HepG2 (cell line): ENCODE measurements at regions of chr13 and their contacts with region 1.

Region 1: GRCh38 chr13:77751513-77752456 is 54.3 kb downstream of the SLAIN1 start:
- DNase-seq: peak; percentile 41
- ATAC-seq: peak; percentile 75
- H3K4me3 ChIP-seq: no peak overlapping the region
- H3K27ac ChIP-seq: no peak overlapping the region
- H3K4me1 ChIP-seq: no peaks in the 10 kb centered on the region
- H3K27me3 ChIP-seq: no peaks in the 10 kb centered on the region
- CTCF ChIP-seq: peak; percentile 78
- EP300 ChIP-seq: no peak
- POLR2A ChIP-seq: no peak
- RAD21 ChIP-seq: no peak

Region 2: DNA sequence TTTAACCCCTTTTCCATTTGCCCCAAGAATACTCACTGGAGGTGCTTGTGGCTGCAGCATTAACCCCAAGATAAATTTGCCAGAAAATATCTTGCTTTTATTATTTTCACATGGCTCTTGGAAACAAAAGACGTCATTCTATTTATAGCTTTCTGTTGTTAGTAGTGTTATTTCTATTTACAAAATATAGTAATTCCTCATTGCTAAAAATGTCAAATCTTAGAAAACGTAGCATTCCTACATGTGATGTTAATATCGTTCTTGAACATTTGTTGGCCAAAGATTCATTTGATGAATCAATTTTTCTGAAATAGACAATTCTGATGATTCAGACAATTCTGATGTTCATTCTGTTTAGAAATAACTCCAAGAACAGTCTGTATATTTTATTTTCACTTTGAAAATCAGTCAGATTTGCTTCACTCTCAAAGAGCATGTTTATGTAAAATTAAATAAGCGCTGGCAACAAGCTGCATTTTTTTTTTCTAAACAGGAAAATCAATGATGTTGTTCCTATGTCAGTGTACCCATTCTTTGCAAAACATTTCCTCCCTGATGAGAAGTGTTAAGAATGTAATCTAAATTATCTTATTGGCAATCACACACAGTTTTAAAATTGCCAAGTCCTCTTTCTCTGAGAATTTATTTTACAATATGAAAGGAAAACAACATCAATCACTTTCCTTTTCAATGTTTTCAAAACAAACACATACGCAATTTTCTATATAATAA is 1199.6 kb before region 1 on chr13:
- CTCF ChIA-PET with region 1: no interaction called
- POLR2A ChIA-PET with region 1: no interaction called
- in situ Hi-C with region 1: no loop called
- intact Hi-C with region 1: no loop called
- DNase-seq: no peak
- ATAC-seq: no peak
- H3K4me3 ChIP-seq: no peak overlapping the region
- H3K27ac ChIP-seq: no peak overlapping the region
- H3K4me1 ChIP-seq: no peaks in the 10 kb centered on the region
- H3K27me3 ChIP-seq: no peaks in the 10 kb centered on the region
- CTCF ChIP-seq: no peak
- EP300 ChIP-seq: no peak
- POLR2A ChIP-seq: no peak
- RAD21 ChIP-seq: no peak

Region 3: DNA sequence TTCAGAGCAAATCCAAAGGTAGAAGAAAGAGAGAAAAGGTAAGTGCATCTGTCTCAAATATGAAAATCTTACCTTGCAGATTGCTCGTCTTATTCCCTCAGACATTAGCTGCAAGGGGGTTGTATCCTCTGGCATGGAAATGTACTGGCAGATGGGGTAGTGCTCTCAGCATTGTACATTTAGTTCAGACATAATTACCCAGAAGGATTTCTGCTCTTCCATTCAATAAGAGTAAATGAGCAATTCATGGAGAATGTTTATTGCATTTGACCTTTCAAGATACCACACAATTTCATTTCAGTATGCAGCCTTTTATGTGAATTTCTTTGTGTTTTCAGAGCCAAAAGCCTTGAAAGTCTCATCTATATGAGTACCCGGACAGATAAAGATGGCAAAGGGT is 152.4 kb before region 1 on chr13:
- CTCF ChIA-PET with region 1: interaction called, 21 read pairs
- POLR2A ChIA-PET with region 1: no interaction called
- in situ Hi-C with region 1: loop called (anchors 5 kb)
- intact Hi-C with region 1: no loop called
- DNase-seq: no peak
- ATAC-seq: no peak
- H3K4me3 ChIP-seq: no peak overlapping the region
- H3K27ac ChIP-seq: no peak overlapping the region
- H3K4me1 ChIP-seq: no peaks in the 10 kb centered on the region
- H3K27me3 ChIP-seq: no peaks in the 10 kb centered on the region; a peak in 1 of 5 replicates
- CTCF ChIP-seq: no peak
- EP300 ChIP-seq: no peak
- POLR2A ChIP-seq: no peak
- RAD21 ChIP-seq: no peak

Region 4: DNA sequence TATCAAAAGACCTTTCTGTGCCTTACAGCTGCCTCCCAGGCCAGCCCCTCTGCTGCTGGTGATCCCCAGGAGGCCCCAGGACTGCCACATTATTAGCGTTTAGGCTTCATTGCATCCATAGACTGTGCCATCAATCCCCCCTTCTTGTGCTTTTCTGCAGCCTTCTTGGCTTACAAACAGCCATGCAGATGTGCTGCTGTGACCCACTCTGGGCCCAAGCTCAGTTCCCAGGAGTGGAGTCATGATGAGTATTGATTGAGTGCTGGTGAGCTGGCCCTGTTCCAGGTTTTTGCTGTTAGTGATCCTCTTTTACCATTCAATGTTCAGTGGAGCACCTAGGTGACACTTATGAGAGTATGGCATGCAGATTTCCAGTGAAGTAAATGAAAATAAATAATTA is 114.2 kb before region 1 on chr13:
- CTCF ChIA-PET with region 1: no interaction called
- POLR2A ChIA-PET with region 1: no interaction called
- in situ Hi-C with region 1: no loop called
- intact Hi-C with region 1: no loop called
- DNase-seq: no peak
- ATAC-seq: no peak
- H3K4me3 ChIP-seq: no peak overlapping the region
- H3K27ac ChIP-seq: no peak overlapping the region
- H3K4me1 ChIP-seq: no peaks in the 10 kb centered on the region
- H3K27me3 ChIP-seq: no peaks in the 10 kb centered on the region
- CTCF ChIP-seq: no peak
- EP300 ChIP-seq: no peak
- POLR2A ChIP-seq: no peak
- RAD21 ChIP-seq: no peak

Region 5: GRCh38 chr13:77729502-77730221 is 22.1 kb before region 1 on chr13:
- CTCF ChIA-PET with region 1: no interaction called
- POLR2A ChIA-PET with region 1: no interaction called
- in situ Hi-C with region 1: no loop called
- intact Hi-C with region 1: loop called (anchors 1 kb)
- DNase-seq: no peak
- ATAC-seq: no peak
- H3K4me3 ChIP-seq: no peak overlapping the region
- H3K27ac ChIP-seq: no peak overlapping the region
- H3K4me1 ChIP-seq: no peaks in the 10 kb centered on the region
- H3K27me3 ChIP-seq: no peaks in the 10 kb centered on the region
- CTCF ChIP-seq: no peak
- EP300 ChIP-seq: no peak
- POLR2A ChIP-seq: no peak
- RAD21 ChIP-seq: no peak